ENCODE measurements at regions of chr21 and their contacts with region 1.

Region 1: DNA sequence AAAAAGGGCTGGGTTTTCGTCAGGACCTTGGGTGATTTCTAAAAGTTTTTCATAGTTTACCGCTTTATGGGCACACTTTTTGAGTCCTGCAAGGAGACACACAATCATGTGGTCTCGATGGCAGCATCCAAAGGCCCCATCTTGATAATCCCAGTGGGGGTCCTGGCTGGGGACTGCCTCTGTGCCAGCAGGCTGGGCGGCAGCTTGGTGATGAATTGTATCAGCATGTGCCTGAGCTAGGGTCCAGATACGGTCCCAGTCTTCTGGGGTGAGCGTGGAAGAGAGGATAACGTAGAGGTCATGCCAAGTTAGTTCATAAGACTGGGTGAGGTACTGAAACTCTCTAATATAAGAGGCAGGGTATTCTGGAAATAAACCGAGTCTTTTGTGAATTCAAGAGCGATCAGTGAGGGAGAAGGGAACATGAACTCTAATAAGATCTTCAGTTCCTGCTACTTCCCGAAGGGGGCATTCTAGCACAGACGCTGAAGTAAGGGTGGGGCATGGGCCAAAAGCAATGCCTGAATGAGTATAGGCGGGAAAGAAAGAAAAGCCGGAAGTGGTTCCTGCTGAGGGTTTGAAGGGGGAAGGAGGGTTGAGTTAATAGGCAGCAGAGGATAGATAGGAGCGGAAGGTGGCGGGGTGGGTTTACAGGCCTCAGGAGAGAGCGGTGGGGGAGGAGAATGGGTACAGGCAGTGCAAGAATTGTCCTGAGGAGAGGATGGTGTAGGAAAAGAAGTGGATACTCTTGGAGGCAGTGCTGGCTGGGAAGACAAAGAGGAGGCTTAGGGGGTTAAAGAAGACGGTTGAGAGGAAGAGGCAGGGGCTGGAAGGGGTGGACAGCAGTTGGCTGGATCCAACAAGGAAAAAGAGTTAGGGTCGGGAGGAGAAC is 1.6 kb downstream of the ERVH48-1 start:
- DNase-seq: peak; percentile 97
- H3K4me3 ChIP-seq: peak overlapping the region; percentile 31
- H3K27ac ChIP-seq: peak overlapping the region; percentile 68
- H3K4me1 ChIP-seq: peaks cover 23% of the 10 kb centered on the region
- CTCF ChIP-seq: peak; percentile 91

Region 2: GRCh38 chr21:42939582-42940410 is 16.0 kb after region 1 on chr21:
- CTCF ChIA-PET with region 1: no interaction called
- POLR2A ChIA-PET with region 1: interaction called, 3 read pairs
- intact Hi-C with region 1: loop called (anchors 1 kb)
- DNase-seq: no peak
- H3K4me3 ChIP-seq: no peak overlapping the region
- H3K27ac ChIP-seq: no peak overlapping the region
- H3K4me1 ChIP-seq: peaks cover 24% of the 10 kb centered on the region
- CTCF ChIP-seq: no peak

Region 3: GRCh38 chr21:42956819-42957632 is 33.2 kb after region 1 on chr21:
- CTCF ChIA-PET with region 1: no interaction called
- POLR2A ChIA-PET with region 1: no interaction called
- intact Hi-C with region 1: loop called (anchors 1 kb)
- DNase-seq: no peak
- H3K4me3 ChIP-seq: no peak overlapping the region
- H3K27ac ChIP-seq: no peak overlapping the region
- H3K4me1 ChIP-seq: no peaks in the 10 kb centered on the region
- CTCF ChIP-seq: no peak

Region 4: DNA sequence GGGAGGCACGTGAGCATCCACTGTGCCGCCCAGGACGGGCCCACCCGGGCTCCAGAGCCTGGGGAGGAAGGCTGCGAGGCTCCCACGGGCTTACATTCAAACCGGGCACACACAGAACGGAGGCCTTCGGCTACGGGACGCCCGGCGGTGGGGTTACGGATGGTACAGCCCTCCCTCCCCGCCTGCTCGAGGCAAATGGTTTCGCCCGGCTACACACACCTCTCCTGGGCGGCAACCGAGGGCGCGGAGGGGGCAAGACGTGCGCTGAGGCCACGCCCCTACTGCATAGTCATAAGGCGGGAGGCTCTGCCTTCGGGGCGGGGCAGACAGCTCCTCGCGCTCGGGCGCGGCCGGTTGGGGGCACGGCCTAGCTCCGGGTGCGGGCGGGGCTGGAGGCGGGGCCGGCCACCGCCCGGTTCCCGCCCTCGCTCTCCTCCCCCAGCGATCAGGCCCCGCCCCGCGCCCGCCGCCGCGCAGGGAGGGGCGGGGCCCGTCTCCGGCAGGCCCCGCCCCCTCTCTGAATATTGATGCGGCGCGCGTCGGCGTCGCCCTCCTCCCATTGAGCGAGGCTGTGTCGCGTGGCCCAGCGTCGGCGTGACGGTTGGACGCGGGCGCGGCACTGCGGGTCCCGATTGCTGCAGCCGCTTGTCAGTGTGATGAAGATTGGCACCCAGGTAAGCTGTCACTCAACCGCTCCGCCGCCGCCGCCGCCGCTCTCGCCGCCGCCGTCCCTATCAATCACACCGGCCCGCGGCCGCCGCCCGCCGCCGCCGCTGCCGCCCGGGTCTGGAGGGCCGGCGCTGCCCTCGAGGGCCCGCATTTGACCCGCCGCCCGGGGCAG is 50.4 kb after region 1 on chr21 and contains the start of gene PKNOX1:
- CTCF ChIA-PET with region 1: no interaction called
- POLR2A ChIA-PET with region 1: no interaction called
- intact Hi-C with region 1: loop called (anchors 2 kb)
- DNase-seq: peak; percentile 100
- H3K4me3 ChIP-seq: peak within 1 kb of the TSS; percentile 73
- H3K27ac ChIP-seq: peak within 1 kb of the TSS; percentile 51
- H3K4me1 ChIP-seq: peaks cover 28% of the 10 kb centered on the region
- CTCF ChIP-seq: no peak
- total RNA-seq, gene PKNOX1: 23.7 and 25.5 TPM in 2 replicates